ENCODE measurements at regions of chr21 and their contacts with region 1.

Region 1: DNA sequence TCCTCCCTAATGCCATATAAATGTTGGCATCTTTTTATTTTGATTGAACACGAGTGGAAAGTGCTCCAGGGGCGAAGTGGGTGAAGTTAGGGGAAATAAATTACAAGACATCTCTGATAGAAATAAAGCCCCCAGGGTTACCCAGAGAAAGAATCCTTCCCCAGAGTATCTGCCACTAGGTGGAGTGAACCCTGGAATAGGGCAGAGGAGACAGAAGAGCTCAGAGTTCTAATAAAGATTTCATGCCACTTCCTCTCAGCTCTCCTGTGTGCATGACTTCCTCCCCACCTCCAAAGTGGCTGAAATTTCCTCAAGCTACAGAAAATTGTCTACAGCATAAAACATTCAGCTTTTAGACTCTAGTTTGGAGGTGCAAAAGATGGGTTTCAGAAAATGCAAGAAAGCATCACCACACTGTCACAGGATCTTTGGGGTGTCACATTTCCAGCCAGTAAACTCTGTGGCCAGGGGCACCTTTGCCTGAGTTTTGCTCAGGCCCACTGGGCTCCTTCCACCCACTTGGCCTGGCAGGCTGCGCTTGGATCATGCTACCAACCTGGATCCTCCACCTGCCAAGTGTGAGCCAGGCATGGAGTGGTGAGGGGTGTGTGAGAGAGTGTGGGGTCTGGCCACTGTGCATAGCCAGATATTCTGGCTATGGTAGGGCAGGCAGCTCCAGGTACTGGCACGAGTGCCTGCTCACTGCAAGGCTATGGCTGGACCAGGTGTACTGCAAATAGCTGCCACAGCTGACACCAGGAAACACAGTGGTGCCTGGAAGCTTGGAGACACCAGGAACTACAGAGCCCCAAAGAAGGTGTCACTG is 208.8 kb upstream of the USP25 start:
- DNase-seq: no peak
- ATAC-seq: no peak
- H3K4me3 Mint-ChIP-seq: no peak overlapping the region
- H3K27ac Mint-ChIP-seq: peak overlapping the region; percentile 52
- H3K4me1 Mint-ChIP-seq: peaks cover 13% of the 10 kb centered on the region
- H3K27me3 Mint-ChIP-seq: no peaks in the 10 kb centered on the region

Region 2: GRCh38 chr21:15121655-15122120 is 399.3 kb before region 1 on chr21:
- CTCF ChIA-PET with region 1: no interaction called
- POLR2A ChIA-PET with region 1: no interaction called
- DNase-seq: no peak
- ATAC-seq: no peak
- H3K4me3 Mint-ChIP-seq: no peak overlapping the region
- H3K27ac Mint-ChIP-seq: no peak overlapping the region
- H3K4me1 Mint-ChIP-seq: no peaks in the 10 kb centered on the region
- H3K27me3 Mint-ChIP-seq: peaks cover 6% of the 10 kb centered on the region

Region 3: GRCh38 chr21:15552914-15553494 is 32.0 kb after region 1 on chr21:
- CTCF ChIA-PET with region 1: interaction called, 12 read pairs
- POLR2A ChIA-PET with region 1: no interaction called
- DNase-seq: no peak
- ATAC-seq: no peak
- H3K4me3 Mint-ChIP-seq: no peak overlapping the region
- H3K27ac Mint-ChIP-seq: no peak overlapping the region
- H3K4me1 Mint-ChIP-seq: peaks cover 3% of the 10 kb centered on the region
- H3K27me3 Mint-ChIP-seq: no peaks in the 10 kb centered on the region

Region 4: GRCh38 chr21:15706692-15707091 is 185.7 kb after region 1 on chr21:
- CTCF ChIA-PET with region 1: no interaction called
- POLR2A ChIA-PET with region 1: no interaction called
- DNase-seq: no peak
- ATAC-seq: no peak
- H3K4me3 Mint-ChIP-seq: no peak overlapping the region
- H3K27ac Mint-ChIP-seq: no peak overlapping the region
- H3K4me1 Mint-ChIP-seq: no peaks in the 10 kb centered on the region
- H3K27me3 Mint-ChIP-seq: peaks cover 8% of the 10 kb centered on the region